T-cell (primary cell): ENCODE measurements at regions of chr21 and their contacts with region 1.

Region 1: GRCh38 chr21:15795533-15795932 is 65.8 kb downstream of the USP25 start:
- DNase-seq: no peak
- ATAC-seq: no peak
- H3K4me3 ChIP-seq: no peak overlapping the region
- H3K4me3 Mint-ChIP-seq: no peak overlapping the region
- H3K27ac ChIP-seq: no peak overlapping the region
- H3K27ac Mint-ChIP-seq: peak overlapping the region; percentile 46 to 63
- H3K4me1 ChIP-seq: peaks cover 0 to 2% of the 10 kb centered on the region in 2 experiments
- H3K4me1 Mint-ChIP-seq: peaks cover 55 to 66% (median 60%) of the 10 kb centered on the region in 3 donors
- H3K27me3 ChIP-seq: no peaks in the 10 kb centered on the region
- H3K27me3 Mint-ChIP-seq: no peaks in the 10 kb centered on the region

Region 2: DNA sequence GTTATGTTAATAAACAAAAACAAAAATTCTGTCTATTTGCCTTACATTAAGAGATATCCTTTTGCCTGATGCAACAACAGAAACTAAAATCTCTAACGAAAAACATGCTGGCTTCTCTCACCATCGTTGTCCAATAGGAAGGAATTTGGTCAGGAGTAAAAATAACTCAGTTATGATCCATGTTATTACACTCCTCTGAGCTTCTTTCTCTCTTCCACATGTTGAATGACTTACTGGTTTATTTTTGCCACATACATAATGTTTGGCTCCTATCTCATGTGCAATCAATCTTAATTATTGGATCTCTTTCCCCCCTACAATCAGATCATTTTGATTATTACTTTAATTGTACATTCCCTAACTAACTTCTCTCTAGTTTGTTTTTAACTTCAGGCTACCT is 622.7 kb after region 1 on chr21:
- CTCF ChIA-PET with region 1: interaction called in 1 of 2 experiments, 10 read pairs
- POLR2A ChIA-PET with region 1: no interaction called
- DNase-seq: no peak
- ATAC-seq: no peak
- H3K4me3 ChIP-seq: no peak overlapping the region
- H3K4me3 Mint-ChIP-seq: no peak overlapping the region
- H3K27ac ChIP-seq: no peak overlapping the region
- H3K27ac Mint-ChIP-seq: no peak overlapping the region
- H3K4me1 ChIP-seq: no peaks in the 10 kb centered on the region
- H3K4me1 Mint-ChIP-seq: no peaks in the 10 kb centered on the region
- H3K27me3 ChIP-seq: no peaks in the 10 kb centered on the region
- H3K27me3 Mint-ChIP-seq: no peaks in the 10 kb centered on the region